ENCODE measurements at regions of chr14 and their contacts with region 1.

Region 1: GRCh38 chr14:73785873-73786695 is 65.5 kb upstream of the PTGR2 start:
- DNase-seq: peak; percentile 84
- H3K4me3 ChIP-seq: peak overlapping the region; percentile 61 to 71 (median 63)
- H3K27ac ChIP-seq: peak overlapping the region; percentile 95
- H3K4me1 ChIP-seq: peaks cover 62% of the 10 kb centered on the region
- H3K27me3 ChIP-seq: no peaks in the 10 kb centered on the region
- CTCF ChIP-seq: peak; percentile 18 to 38

Region 2: GRCh38 chr14:73728717-73729330 is 57.3 kb before region 1 on chr14:
- CTCF ChIA-PET with region 1: interaction called, 3 read pairs
- dilution Hi-C with region 1: no loop called
- in situ Hi-C with region 1: no loop called
- intact Hi-C with region 1: loop called (anchors 2 kb)
- DNase-seq: peak; percentile 50
- H3K4me3 ChIP-seq: no peak overlapping the region
- H3K27ac ChIP-seq: no peak overlapping the region
- H3K4me1 ChIP-seq: peaks cover 42% of the 10 kb centered on the region
- H3K27me3 ChIP-seq: no peaks in the 10 kb centered on the region
- CTCF ChIP-seq: peak; percentile 92 to 95

Region 3: DNA sequence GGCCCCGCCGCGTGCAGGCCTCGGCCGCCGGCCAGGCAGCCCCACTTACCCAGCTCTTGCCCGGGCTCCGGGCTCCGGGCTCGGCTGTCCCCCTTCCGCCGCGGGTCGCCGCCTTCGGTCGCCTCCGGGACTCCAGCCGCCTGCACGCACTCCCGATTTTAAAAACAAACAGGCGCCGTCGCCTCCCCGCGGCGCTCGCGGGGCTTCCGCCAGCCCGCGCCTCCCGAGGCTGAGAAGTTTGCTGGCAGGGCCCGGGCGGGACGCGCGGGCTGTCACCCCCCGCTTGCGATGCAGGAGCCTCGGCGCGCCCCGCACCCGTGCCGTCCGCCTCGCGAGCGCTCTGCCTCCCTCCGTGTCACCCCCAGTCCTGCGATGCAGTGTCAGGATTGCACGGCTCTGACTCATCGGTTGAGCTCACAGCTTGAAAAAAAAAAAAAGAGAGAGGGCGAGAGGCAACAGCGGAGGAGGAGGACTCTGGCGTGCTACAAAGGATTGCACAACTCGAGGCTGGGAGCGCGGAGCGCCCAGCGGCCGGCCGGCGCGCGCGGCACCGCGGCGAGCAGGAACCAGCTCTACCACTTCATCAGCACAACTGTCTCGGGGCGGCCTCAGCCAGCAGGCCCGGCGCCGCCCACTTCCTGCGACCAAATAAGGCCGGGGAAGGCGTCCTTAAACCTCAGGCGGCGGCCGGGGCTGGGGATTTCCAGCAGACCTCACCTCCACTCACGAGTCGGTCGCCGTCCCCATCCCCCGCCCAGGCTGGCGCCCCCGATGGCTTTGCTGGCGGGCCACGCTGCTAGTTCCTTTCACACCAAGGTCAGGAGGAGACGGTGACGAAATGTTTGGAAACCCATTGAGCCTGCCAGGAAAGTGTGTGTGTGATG is 26.1 kb before region 1 on chr14:
- CTCF ChIA-PET with region 1: interaction called, 4 read pairs
- dilution Hi-C with region 1: no loop called
- in situ Hi-C with region 1: no loop called
- intact Hi-C with region 1: loop called (anchors 1 kb)
- DNase-seq: peak; percentile 100
- H3K4me3 ChIP-seq: peak overlapping the region; percentile 45 to 93 (median 84)
- H3K27ac ChIP-seq: peak overlapping the region; percentile 91
- H3K4me1 ChIP-seq: peaks cover 44% of the 10 kb centered on the region
- H3K27me3 ChIP-seq: no peaks in the 10 kb centered on the region
- CTCF ChIP-seq: no peak

Region 4: GRCh38 chr14:73825551-73826188 is 39.6 kb after region 1 on chr14:
- CTCF ChIA-PET with region 1: interaction called, 4 read pairs
- dilution Hi-C with region 1: loop called (anchors 5 kb)
- in situ Hi-C with region 1: no loop called
- intact Hi-C with region 1: loop called (anchors 1 kb)
- DNase-seq: peak; percentile 64
- H3K4me3 ChIP-seq: no peak overlapping the region
- H3K27ac ChIP-seq: no peak overlapping the region
- H3K4me1 ChIP-seq: peaks cover 15% of the 10 kb centered on the region
- H3K27me3 ChIP-seq: no peaks in the 10 kb centered on the region
- CTCF ChIP-seq: peak; percentile 80 to 95

Region 5: DNA sequence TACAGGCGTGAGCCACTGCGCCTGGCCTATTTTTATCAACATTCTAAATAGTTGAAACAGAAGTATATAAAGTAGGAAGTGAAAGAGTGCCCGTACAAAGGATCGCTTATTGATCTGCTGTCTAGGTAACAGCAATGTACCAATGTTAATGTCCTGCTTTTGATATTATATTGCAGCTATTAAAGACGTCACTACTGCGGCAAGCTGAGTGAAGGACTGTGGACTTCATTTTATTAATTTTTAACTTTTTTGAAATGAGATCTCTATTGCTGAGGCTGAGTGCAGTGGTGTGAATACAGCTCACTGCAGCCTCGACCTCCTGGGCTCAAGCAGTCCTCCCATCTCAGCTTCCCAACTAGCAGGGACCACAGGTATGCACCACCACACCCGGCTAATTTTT is 76.4 kb after region 1 on chr14:
- CTCF ChIA-PET with region 1: no interaction called
- dilution Hi-C with region 1: no loop called
- in situ Hi-C with region 1: no loop called
- intact Hi-C with region 1: no loop called
- DNase-seq: no peak
- H3K4me3 ChIP-seq: no peak overlapping the region
- H3K27ac ChIP-seq: no peak overlapping the region
- H3K4me1 ChIP-seq: no peaks in the 10 kb centered on the region
- H3K27me3 ChIP-seq: no peaks in the 10 kb centered on the region
- CTCF ChIP-seq: no peak

Region 6: GRCh38 chr14:73886449-73887317 is 100.6 kb after region 1 on chr14 and contains the start of gene ZNF410:
- CTCF ChIA-PET with region 1: no interaction called
- dilution Hi-C with region 1: loop called (anchors 5 kb)
- in situ Hi-C with region 1: no loop called
- intact Hi-C with region 1: no loop called
- DNase-seq: peak; percentile 98
- H3K4me3 ChIP-seq: peak within 1 kb of the TSS; percentile 83 to 94 (median 89)
- H3K27ac ChIP-seq: peak within 1 kb of the TSS; percentile 79
- H3K4me1 ChIP-seq: peaks cover 17% of the 10 kb centered on the region
- H3K27me3 ChIP-seq: no peaks in the 10 kb centered on the region
- CTCF ChIP-seq: no peak
- total RNA-seq, gene ZNF410: 58.3 to 93.9 TPM

Measured in mammary epithelial cell (primary cell).